ENCODE measurements at regions of chr9 and their contacts with region 1.

Region 1: GRCh38 chr9:100058699-100059579 is 39.9 kb downstream of the ERP44 start:
- DNase-seq: peak; percentile 78
- ATAC-seq: peak; percentile 91
- H3K4me3 ChIP-seq: peak overlapping the region; percentile 34; the same call in 1 of the 2 replicates
- H3K27ac ChIP-seq: peak overlapping the region; percentile 57
- H3K4me1 ChIP-seq: peaks cover 29% of the 10 kb centered on the region
- H3K27me3 ChIP-seq: no peaks in the 10 kb centered on the region
- CTCF ChIP-seq: no peak
- EP300 ChIP-seq: peak; percentile 85 to 92
- POLR2A ChIP-seq: no peak
- RAD21 ChIP-seq: 0 out of 2 replicates have a peak, but pooled peaks have one; percentile 11

Region 2: GRCh38 chr9:99796231-99796630 is 262.7 kb before region 1 on chr9:
- CTCF ChIA-PET with region 1: no interaction called
- POLR2A ChIA-PET with region 1: no interaction called
- RAD21 ChIA-PET with region 1: no interaction called
- SMC1A ChIA-PET with region 1: no interaction called
- in situ Hi-C with region 1: no loop called
- intact Hi-C with region 1: no loop called
- DNase-seq: no peak
- ATAC-seq: no peak
- H3K4me3 ChIP-seq: no peak overlapping the region
- H3K27ac ChIP-seq: no peak overlapping the region
- H3K4me1 ChIP-seq: no peaks in the 10 kb centered on the region
- H3K27me3 ChIP-seq: no peaks in the 10 kb centered on the region
- CTCF ChIP-seq: no peak
- EP300 ChIP-seq: no peak
- POLR2A ChIP-seq: no peak
- RAD21 ChIP-seq: no peak

Region 3: DNA sequence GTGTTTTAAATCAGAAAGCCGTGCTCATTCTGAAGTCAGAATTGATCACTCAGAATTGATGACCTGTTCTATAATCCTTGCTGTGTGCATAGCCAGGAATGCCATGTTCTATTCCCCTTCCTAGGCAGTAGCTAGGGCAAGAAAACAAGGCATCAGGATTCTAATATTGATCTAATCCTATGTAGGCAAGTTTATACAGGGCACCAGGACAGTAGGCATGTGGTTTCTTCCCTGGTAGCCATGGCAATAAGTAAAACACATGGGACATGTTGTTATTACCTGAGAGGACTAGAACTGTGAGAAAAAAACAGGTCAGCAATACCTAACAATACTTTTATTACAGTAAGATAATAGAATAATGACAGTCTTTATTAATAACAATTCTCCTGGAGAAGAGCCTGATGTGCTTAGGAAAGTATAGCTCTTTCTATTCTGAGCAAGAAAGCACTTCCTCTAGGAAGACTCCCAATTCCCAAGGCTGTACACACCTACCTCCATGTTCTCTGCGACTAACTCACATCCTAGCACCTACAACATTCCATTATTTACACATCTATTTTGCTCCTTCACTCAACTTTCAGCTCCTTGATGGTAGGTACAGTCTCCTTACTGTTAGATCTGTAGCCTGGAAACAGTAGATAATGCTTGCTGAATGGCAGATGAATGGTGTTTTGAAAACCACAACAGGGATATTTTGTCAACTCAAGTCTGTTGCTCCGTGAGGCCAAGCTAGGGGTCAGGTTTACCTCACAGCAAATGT is 81.7 kb before region 1 on chr9:
- CTCF ChIA-PET with region 1: no interaction called
- POLR2A ChIA-PET with region 1: no interaction called
- RAD21 ChIA-PET with region 1: no interaction called
- SMC1A ChIA-PET with region 1: no interaction called
- in situ Hi-C with region 1: no loop called
- intact Hi-C with region 1: no loop called
- DNase-seq: no peak
- ATAC-seq: no peak
- H3K4me3 ChIP-seq: no peak overlapping the region
- H3K27ac ChIP-seq: no peak overlapping the region
- H3K4me1 ChIP-seq: no peaks in the 10 kb centered on the region
- H3K27me3 ChIP-seq: no peaks in the 10 kb centered on the region
- CTCF ChIP-seq: no peak
- EP300 ChIP-seq: no peak
- POLR2A ChIP-seq: no peak
- RAD21 ChIP-seq: no peak

Region 4: GRCh38 chr9:100098887-100099721 is 40.2 kb after region 1 on chr9 and contains the starts of genes ERP44 and INVS:
- CTCF ChIA-PET with region 1: interaction called, 4 read pairs
- POLR2A ChIA-PET with region 1: interaction called, 3 read pairs
- RAD21 ChIA-PET with region 1: no interaction called
- SMC1A ChIA-PET with region 1: interaction called, 11 read pairs
- in situ Hi-C with region 1: no loop called
- intact Hi-C with region 1: loop called (anchors 5 kb)
- DNase-seq: peak; percentile 97
- ATAC-seq: peak; percentile 98
- H3K4me3 ChIP-seq: peak within 1 kb of the TSS; percentile 99
- H3K27ac ChIP-seq: peak within 1 kb of the TSS; percentile 92
- H3K4me1 ChIP-seq: no peaks in the 10 kb centered on the region
- H3K27me3 ChIP-seq: no peaks in the 10 kb centered on the region
- CTCF ChIP-seq: no peak
- EP300 ChIP-seq: no peak
- POLR2A ChIP-seq: peak; percentile 96
- RAD21 ChIP-seq: 0 out of 2 replicates have a peak, but pooled peaks have one; percentile 1
- polyA plus RNA-seq, gene ERP44: 13.5 to 14.4 TPM
- polyA plus RNA-seq, gene INVS: 0.93 to 1.0 TPM

Measured in GM12878 (cell line).